MCF 10A (cell line): ENCODE measurements at regions of chr5 and their contacts with region 1.

Region 1: DNA sequence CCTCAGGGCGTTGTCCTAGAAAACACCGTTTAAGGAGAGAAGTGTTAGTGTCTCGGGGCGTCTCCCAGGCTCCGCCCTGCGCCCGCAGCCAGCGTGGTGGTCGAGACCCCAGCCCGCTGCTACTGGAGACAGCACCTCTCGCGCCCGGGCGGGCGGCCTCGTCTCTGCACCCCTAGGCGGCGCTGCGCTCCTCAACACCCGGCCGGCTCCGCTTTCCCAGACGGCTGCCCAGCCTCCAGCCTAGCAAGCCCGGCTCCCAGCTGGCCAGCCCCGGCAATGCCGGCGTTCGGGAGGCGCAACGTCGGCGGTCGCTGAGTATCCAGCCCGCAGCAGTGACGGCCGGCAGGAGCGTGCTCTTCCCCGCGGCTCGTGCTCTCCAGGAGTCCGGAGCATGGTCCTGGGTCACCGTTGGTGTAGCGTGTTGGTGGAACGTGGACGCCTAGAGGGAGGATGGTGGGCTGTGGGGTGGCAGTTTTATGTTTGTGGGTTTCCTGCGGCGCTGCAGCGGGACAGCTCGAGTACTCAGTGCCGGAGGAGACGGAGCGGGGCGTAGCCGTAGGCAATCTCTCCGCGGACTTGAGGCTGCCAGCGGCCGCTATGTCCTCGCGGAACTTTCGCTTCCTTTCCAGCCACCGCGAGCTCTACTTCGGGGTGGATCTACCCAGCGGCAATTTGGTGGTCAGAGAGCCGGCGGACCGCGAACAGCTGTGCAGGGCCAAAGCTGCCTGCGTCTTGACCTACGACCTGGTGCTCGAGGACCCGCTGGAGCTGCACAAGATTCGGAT is 536 bp downstream of the PCDHAC1 start:
- DNase-seq: peak; percentile 92
- H3K4me3 Mint-ChIP-seq: peak overlapping the region; percentile 95
- H3K27ac Mint-ChIP-seq: peak overlapping the region; percentile 85
- H3K4me1 Mint-ChIP-seq: peaks cover 31% of the 10 kb centered on the region
- H3K27me3 Mint-ChIP-seq: no peaks in the 10 kb centered on the region
- CTCF ChIP-seq: peak; percentile 98

Region 2: GRCh38 chr5:140868721-140869554 is 57.7 kb before region 1 on chr5 and contains the start of gene PCDHA11:
- CTCF ChIA-PET with region 1: interaction called, 80 read pairs
- POLR2A ChIA-PET with region 1: interaction called, 59 read pairs
- intact Hi-C with region 1: loop called (anchors 1 kb)
- DNase-seq: peak; percentile 14
- H3K4me3 Mint-ChIP-seq: no peak within 1 kb of the TSS
- H3K27ac Mint-ChIP-seq: no peak within 1 kb of the TSS
- H3K4me1 Mint-ChIP-seq: peaks cover 4% of the 10 kb centered on the region
- H3K27me3 Mint-ChIP-seq: no peaks in the 10 kb centered on the region
- CTCF ChIP-seq: peak; percentile 47
- total RNA-seq, gene PCDHA11: 0.27 and 0.49 TPM in 2 replicates

Region 3: DNA sequence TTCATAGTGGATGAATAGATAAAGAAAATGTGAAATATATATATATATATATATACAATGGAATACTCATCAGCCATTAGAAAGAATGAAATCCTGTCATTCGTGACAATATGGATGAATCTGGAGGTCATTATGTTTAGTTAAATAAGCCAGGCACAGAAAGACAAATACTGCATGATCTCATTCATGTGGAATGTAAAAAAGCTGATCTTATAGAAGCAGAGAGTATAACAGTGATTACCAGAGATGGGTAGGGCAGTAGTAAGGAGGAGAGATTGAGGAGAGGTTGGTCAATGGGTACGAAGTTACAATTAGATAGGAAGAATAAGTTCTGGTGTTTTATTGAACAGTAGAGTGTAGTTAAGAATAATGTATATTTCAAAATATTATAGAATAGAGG is 19.9 kb after region 1 on chr5:
- CTCF ChIA-PET with region 1: interaction called, 23 read pairs
- POLR2A ChIA-PET with region 1: interaction called, 37 read pairs
- intact Hi-C with region 1: loop called (anchors 2 kb)
- DNase-seq: no peak
- H3K4me3 Mint-ChIP-seq: no peak overlapping the region
- H3K27ac Mint-ChIP-seq: no peak overlapping the region
- H3K4me1 Mint-ChIP-seq: peaks cover 20% of the 10 kb centered on the region
- H3K27me3 Mint-ChIP-seq: no peaks in the 10 kb centered on the region
- CTCF ChIP-seq: no peak

Region 4: GRCh38 chr5:140966293-140967225 is 39.9 kb after region 1 on chr5 and contains the start of gene PCDHAC2:
- CTCF ChIA-PET with region 1: interaction called, 41 read pairs
- POLR2A ChIA-PET with region 1: interaction called, 24 read pairs
- intact Hi-C with region 1: loop called (anchors 2 kb)
- DNase-seq: peak; percentile 55
- H3K4me3 Mint-ChIP-seq: peak within 1 kb of the TSS; percentile 94
- H3K27ac Mint-ChIP-seq: peak within 1 kb of the TSS; percentile 90
- H3K4me1 Mint-ChIP-seq: peaks cover 24% of the 10 kb centered on the region
- H3K27me3 Mint-ChIP-seq: no peaks in the 10 kb centered on the region
- CTCF ChIP-seq: no peak
- total RNA-seq, gene PCDHAC2: 9.3 and 12.3 TPM in 2 replicates

Region 5: DNA sequence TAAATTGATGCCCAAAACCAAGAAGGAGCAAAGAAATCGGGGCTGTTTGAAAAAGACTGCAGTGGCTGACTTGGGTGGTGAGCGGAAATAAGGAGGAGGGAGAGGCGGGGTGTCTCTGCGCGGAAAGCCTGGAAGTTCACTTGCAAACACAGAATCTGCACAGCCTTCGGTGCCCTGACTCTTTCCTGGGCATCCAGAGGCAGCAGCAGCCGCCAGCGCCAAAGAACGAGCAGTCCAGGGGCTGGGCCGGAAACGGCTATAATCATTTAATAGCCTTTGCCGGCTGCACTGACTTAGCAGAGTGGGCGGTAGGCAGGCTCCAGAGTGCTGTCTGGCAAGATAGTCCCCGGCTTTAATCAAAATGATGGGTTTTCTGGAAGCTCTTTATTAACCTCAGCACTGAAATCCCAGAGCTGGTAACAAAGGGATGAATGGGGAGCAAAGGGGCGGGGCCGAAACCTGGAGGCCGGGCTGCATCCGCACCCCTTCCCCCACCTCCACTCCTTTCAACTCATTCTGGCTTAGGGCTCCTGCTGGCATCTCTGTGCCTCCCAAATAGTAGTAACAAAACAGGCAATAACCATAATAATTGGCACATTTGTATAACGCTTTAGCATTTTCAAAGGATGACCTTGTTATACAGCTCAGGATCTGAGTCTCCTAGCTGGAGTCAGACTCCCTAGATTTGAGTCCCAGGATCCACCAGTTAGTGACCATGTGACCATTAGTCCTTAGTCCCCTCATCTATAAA is 75.4 kb after region 1 on chr5:
- CTCF ChIA-PET with region 1: interaction called, 74 read pairs
- POLR2A ChIA-PET with region 1: interaction called, 92 read pairs
- intact Hi-C with region 1: loop called (anchors 1 kb)
- DNase-seq: peak; percentile 56
- H3K4me3 Mint-ChIP-seq: peak overlapping the region; percentile 74
- H3K27ac Mint-ChIP-seq: peak overlapping the region; percentile 94
- H3K4me1 Mint-ChIP-seq: peaks cover 30% of the 10 kb centered on the region
- H3K27me3 Mint-ChIP-seq: no peaks in the 10 kb centered on the region
- CTCF ChIP-seq: no peak

Region 6: DNA sequence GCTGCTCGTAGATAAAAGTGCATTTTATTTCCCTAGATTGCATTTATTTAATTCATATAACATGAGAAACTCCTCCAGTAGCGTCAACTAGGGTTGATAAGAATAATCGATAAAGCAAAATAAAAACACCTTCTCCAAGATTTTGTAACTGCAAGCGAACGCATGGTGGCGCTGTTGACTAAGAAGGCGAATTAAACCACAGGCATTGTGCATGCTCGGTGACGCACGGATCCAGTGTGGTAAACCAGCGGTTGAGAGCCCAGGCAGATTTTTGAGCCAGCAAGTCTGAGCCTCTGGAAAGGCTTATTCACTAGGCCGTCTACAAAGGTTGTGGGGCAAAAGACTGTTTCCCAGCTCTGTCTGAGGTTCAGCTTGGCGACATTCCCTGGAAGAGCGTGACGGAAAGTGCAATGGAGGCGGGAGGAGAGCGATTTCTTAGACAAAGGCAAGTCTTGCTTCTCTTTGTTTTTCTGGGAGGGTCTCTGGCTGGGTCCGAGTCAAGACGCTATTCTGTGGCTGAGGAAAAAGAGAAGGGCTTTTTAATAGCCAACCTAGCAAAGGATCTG is 173.7 kb after region 1 on chr5 and contains the start of gene PCDHB3:
- CTCF ChIA-PET with region 1: no interaction called
- POLR2A ChIA-PET with region 1: no interaction called
- intact Hi-C with region 1: no loop called
- DNase-seq: peak; percentile 50
- H3K4me3 Mint-ChIP-seq: no peak within 1 kb of the TSS
- H3K27ac Mint-ChIP-seq: no peak within 1 kb of the TSS
- H3K4me1 Mint-ChIP-seq: no peaks in the 10 kb centered on the region
- H3K27me3 Mint-ChIP-seq: no peaks in the 10 kb centered on the region
- CTCF ChIP-seq: peak; percentile 28
- total RNA-seq, gene PCDHB3: 0.42 and 0.49 TPM in 2 replicates